ENCODE measurements at regions of chr5 and their contacts with region 1.

Region 1: DNA sequence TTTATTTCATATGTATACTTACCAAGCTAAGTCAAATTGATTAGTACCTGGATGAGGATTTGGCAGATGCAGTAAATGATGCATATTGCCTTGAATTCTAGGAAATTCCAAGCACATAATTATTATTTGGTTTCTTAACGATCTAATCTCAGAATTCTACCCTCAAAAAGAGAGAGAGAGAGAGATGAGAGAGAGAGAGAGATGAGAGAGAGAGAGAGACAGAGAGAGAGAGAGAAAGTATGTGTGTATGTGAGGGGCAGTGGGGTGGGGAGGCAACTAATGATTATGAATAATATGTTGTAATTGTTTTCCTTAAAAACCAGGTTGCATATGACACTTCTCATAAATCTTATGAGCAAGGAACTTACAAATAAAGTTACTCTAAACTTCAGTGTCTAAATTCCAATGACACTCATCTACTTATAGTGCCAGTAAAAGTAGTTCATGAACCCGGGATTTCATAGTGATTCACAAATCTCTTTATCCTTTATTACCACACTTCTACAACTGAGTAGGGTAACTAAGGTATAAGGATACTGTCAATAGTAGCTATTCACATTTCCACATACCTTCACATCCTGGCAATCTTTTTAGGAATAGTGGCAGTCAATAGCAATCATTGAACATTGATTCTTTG is 60.5 kb upstream of the EDIL3 start:
- DNase-seq: no peak
- ATAC-seq: no peak
- H3K4me3 ChIP-seq: no peak overlapping the region
- H3K27ac ChIP-seq: no peak overlapping the region
- H3K4me1 ChIP-seq: no peaks in the 10 kb centered on the region
- H3K27me3 ChIP-seq: no peaks in the 10 kb centered on the region
- CTCF ChIP-seq: no peak
- EP300 ChIP-seq: no peak
- POLR2A ChIP-seq: no peak
- RAD21 ChIP-seq: no peak

Region 2: DNA sequence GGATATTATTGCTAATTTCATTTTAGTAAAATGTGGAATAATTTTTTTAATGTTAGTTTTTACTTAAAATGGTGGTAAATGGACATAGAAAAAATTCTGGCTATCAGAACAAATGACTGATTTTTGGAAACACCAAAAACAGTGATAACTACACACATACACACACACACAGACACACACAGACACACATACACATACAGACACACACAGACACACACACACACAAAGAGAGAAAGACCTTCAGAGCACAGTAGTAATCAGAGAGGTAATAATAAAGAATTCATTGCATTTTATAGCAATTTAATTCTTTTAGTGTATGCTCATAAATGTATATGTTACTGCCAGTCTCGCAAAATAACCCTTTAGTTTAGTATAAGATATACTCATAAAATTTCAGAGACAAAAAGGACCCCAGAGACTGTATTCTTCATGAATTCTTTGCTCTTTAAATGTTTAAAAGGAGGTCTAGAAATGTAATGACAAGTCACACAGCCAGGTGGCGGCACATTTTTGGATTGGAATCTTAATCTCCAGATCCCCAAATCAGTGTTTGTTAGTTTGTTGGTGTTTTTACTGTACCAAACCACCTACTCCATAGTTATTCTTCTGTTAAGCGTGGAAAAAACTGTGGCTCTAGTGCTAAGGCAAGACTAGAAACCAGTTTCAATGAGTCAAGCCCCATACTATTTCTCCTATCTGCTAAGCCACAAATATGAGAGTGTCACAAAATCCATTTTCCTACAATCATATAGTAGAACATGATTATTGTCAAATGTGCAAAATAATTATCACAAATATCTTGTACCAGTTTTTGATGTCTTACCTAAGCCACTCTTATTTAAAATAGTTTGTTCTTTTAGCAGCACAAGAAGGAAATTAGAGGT is 170.3 kb before region 1 on chr5:
- CTCF ChIA-PET with region 1: no interaction called
- POLR2A ChIA-PET with region 1: no interaction called
- in situ Hi-C with region 1: no loop called
- intact Hi-C with region 1: loop called (anchors 10 kb)
- DNase-seq: peak; percentile 9
- ATAC-seq: no peak; the same call in 2 of the 3 replicates
- H3K4me3 ChIP-seq: no peak overlapping the region
- H3K27ac ChIP-seq: no peak overlapping the region
- H3K4me1 ChIP-seq: no peaks in the 10 kb centered on the region
- H3K27me3 ChIP-seq: no peaks in the 10 kb centered on the region
- CTCF ChIP-seq: peak; percentile 50
- EP300 ChIP-seq: no peak
- POLR2A ChIP-seq: no peak
- RAD21 ChIP-seq: no peak

Measured in HepG2 (cell line).